ENCODE measurements at regions of chr19 and their contacts with region 1.

Region 1: GRCh38 chr19:51179256-51179655 is 37.2 kb downstream of the SIGLEC7 start:
- DNase-seq: no peak
- H3K4me3 ChIP-seq: no peak overlapping the region
- H3K27ac ChIP-seq: no peak overlapping the region
- H3K4me1 ChIP-seq: no peaks in the 10 kb centered on the region
- H3K27me3 ChIP-seq: no peaks in the 10 kb centered on the region
- CTCF ChIP-seq: no peak

Region 2: GRCh38 chr19:51064534-51065220 is 114.6 kb before region 1 on chr19 and contains the start of gene KLK13:
- CTCF ChIA-PET with region 1: no interaction called
- dilution Hi-C with region 1: no loop called
- in situ Hi-C with region 1: no loop called
- intact Hi-C with region 1: no loop called
- DNase-seq: peak; percentile 12
- H3K4me3 ChIP-seq: peak within 1 kb of the TSS in 2 of 3 experiments; percentile 27 to 31
- H3K27ac ChIP-seq: no peak within 1 kb of the TSS
- H3K4me1 ChIP-seq: peaks cover 9% of the 10 kb centered on the region
- H3K27me3 ChIP-seq: no peaks in the 10 kb centered on the region
- CTCF ChIP-seq: no peak
- total RNA-seq, gene KLK13: 0.28 to 0.83 TPM

Region 3: GRCh38 chr19:51131780-51132680 is 47.2 kb before region 1 on chr19:
- CTCF ChIA-PET with region 1: no interaction called
- dilution Hi-C with region 1: loop called (anchors 5 kb)
- in situ Hi-C with region 1: no loop called
- intact Hi-C with region 1: no loop called
- DNase-seq: no peak
- H3K4me3 ChIP-seq: no peak overlapping the region
- H3K27ac ChIP-seq: no peak overlapping the region
- H3K4me1 ChIP-seq: no peaks in the 10 kb centered on the region
- H3K27me3 ChIP-seq: peaks cover 3% of the 10 kb centered on the region
- CTCF ChIP-seq: no peak

Region 4: DNA sequence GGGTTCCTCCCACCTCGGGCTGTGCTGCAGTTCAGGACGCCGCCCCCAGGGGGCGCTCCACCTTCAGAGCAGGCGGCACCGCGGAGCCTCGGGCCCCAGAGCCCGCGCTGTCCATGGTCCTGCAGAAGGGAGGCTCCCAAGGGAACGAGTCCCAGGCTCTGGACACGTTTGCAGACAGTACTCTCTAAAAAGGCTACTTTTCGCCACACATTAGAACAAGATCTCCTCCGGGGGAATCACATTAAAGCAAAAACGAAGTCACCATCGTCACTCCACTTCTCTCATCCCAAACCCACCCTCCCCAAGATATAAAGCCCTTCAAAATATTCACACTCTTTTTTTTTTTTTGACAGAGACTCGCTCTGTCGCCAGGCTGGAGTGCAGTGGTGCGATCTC is 242.8 kb after region 1 on chr19:
- CTCF ChIA-PET with region 1: no interaction called
- dilution Hi-C with region 1: no loop called
- in situ Hi-C with region 1: no loop called
- intact Hi-C with region 1: no loop called
- DNase-seq: peak; percentile 63
- H3K4me3 ChIP-seq: no peak overlapping the region
- H3K27ac ChIP-seq: no peak overlapping the region
- H3K4me1 ChIP-seq: no peaks in the 10 kb centered on the region
- H3K27me3 ChIP-seq: peaks cover 2% of the 10 kb centered on the region
- CTCF ChIP-seq: peak; percentile 87 to 99